ENCODE measurements at regions of chr2 and their contacts with region 1.

Region 1: DNA sequence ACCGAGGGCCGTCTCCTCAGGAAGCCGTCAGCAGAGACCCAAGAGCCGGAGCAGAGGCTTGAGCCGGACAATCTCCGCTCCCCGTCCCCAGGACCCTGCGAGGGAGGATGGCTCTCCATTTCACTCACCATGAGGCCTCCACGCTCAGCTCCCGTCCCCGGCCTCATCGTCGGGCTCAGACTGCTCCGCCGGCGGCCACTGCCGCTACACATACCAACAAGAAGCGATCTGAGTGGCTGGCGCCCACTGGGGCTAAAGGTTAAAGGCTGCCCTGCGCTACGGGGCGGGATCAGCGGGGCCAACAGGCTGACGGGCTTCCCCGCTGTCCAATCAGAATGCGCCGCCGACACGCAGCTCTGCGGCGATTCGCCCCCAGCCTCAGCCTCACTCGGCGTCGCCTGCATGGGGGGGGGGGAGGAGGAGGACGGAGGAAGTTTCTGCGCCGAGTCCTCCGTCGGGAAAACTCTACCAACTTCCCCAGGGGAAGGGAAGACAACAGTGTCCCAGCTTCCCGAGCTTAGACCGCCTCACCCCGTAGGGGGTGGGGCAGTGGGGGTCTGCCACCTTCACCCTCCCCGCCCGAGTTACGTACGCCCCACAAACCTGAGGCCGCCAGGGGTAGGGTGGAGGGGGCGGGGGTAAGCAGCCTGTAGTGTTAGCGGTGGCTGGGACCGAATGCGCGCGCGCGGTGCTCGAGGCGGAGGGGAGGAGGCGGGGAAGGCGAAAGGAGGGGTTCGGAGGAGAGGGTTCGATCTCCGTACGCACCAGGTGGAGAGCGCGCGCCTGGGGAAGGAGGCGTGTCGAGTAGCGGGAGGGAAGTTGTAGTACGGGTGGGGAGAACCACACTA is at the start of gene PRPF40A:
- DNase-seq: peak; percentile 88
- H3K4me3 ChIP-seq: peak within 1 kb of the TSS; percentile 72
- H3K27me3 ChIP-seq: no peaks in the 10 kb centered on the region
- CTCF ChIP-seq: 0 out of 2 replicates have a peak, but pooled peaks have one; percentile 5
- polyA plus RNA-seq, gene PRPF40A: 82.4 and 135 TPM in 2 replicates

Region 2: DNA sequence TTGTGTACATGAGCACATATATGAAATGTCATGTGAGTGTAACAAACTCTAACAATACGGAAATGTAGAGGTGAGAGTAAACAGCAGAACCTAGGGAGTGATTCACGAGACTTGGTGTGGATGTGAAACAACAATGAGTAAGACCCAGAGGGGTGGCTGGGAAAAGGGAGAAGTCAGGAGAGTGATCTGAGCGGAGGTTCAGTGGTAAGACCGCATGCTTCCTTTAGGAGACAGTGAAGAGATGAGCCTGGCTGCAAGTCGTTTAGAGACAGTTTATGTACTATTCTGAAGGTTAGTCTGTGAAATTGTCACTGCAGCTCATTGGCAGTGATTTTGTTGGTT is 150.8 kb before region 1 on chr2:
- CTCF ChIA-PET with region 1: no interaction called
- POLR2A ChIA-PET with region 1: no interaction called
- DNase-seq: no peak
- H3K4me3 ChIP-seq: no peak overlapping the region
- H3K27me3 ChIP-seq: no peaks in the 10 kb centered on the region
- CTCF ChIP-seq: no peak

Region 3: DNA sequence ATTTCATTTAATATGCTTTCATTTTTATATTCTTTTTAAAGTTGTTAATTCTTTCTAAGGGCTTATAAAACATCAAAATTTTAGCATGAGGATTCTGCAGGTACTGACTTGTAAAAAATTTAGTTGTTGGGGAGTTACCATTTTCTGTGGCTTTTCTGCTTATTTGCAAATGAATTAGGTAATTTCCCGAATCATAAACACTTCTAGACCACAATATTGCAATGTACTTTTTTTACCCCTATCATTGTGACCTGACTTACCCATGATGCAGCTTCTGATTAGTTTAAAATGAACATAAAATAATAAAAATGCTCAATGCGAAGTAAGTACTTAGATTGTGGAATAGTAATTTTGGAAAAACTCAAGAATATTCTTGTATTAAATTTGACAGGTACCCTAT is 12.4 kb after region 1 on chr2:
- CTCF ChIA-PET with region 1: interaction called, 4 read pairs
- POLR2A ChIA-PET with region 1: interaction called, 10 read pairs
- DNase-seq: no peak
- H3K4me3 ChIP-seq: no peak overlapping the region
- H3K27me3 ChIP-seq: no peaks in the 10 kb centered on the region
- CTCF ChIP-seq: no peak

Measured in BJ (cell line).